Lower lobe of right lung (tissue), 2 donors: ENCODE measurements at regions of chr5 and their contacts with region 1.

Region 1: DNA sequence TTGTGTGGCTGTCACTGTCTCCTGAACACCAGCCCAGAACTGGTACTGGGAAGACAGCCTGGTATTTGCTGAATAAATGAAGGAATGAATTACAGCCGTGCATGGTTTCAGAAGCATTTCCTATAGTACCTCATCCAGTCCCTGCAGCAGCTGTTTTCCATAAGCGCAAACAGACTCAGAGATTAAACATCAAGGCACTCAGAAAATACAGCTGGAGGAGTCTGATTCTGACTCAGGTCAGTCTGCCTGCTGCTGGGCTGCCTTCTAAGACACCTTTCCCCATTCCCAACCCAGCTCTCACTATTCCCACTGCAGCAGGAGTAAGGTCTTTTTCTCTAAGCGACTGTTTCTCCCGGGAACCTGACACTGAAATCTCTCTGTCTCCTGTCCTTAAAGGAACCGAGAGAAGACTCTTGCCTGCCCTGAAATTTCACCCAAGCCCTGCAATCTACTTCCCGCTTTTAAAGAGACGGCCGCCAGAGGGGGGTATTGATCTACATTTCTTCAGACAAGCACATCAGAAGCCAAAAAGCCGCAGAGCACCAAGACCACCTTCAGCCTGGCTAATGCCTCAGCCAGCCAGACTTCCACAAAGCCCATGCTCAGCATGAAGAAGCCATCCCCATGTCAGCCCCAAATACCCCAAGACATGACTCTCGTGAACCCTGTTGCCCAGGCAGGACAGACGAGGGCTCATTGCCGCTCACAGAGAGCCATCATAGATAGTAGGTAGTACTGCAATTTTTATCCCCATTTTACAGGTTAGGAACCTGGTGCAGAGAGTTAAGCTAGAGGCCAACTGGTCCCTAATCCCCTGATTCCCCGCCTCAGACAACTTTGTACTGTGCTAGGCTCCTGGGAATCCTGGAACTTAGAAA is 5.4 kb upstream of the FOXI1 start:
- DNase-seq: peak; percentile 69
- ATAC-seq: peak in 1 of 2 donors; percentile 58
- H3K4me3 ChIP-seq: no peak overlapping the region
- H3K27ac ChIP-seq: no peak overlapping the region
- H3K4me1 ChIP-seq: no peaks in the 10 kb centered on the region
- H3K27me3 ChIP-seq: no peaks in the 10 kb centered on the region
- CTCF ChIP-seq: peak; percentile 67

Region 2: GRCh38 chr5:170034231-170034630 is 66.1 kb before region 1 on chr5:
- intact Hi-C with region 1: no loop called
- DNase-seq: no peak
- ATAC-seq: no peak
- H3K4me3 ChIP-seq: no peak overlapping the region
- H3K27ac ChIP-seq: no peak overlapping the region
- H3K4me1 ChIP-seq: no peaks in the 10 kb centered on the region
- H3K27me3 ChIP-seq: no peaks in the 10 kb centered on the region
- CTCF ChIP-seq: no peak

Region 3: GRCh38 chr5:170179626-170180025 is 79.3 kb after region 1 on chr5:
- intact Hi-C with region 1: loop called (anchors 5 kb)
- DNase-seq: no peak
- ATAC-seq: no peak
- H3K4me3 ChIP-seq: no peak overlapping the region
- H3K27ac ChIP-seq: no peak overlapping the region
- H3K4me1 ChIP-seq: peaks cover 4% of the 10 kb centered on the region
- H3K27me3 ChIP-seq: no peaks in the 10 kb centered on the region
- CTCF ChIP-seq: no peak